OCI-LY7 (cell line): ENCODE measurements at regions of chr20 and their contacts with region 1.

Region 1: DNA sequence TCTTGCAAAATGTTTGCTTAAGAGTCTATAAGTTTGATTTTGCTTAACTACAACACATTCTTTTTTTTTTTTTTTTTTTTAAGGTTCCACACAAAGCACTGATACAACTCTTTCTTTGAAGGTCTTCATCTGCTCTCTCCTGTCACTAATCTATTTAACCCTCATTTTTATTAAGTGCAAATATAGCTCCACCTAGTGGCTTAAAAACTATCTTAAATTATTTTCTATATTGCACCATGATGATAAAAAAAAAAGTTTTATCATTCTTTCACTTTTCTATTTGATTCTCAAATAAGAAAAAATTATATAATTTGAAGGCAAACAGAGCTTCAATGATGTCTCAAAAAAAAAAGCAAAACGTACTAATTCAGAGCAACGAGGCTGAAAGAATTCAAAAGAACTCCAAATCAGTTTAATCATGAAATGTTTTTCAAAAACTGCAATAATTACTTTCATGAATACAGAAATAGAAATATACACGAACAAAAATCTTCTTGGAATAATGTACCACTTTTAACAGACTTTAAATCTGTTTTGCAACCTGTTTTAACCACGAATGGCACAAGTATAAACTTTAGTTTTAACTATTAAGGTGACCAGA is 12.8 kb downstream of the ESF1 start:
- DNase-seq: peak; percentile 56
- H3K4me3 ChIP-seq: no peak overlapping the region
- H3K27ac ChIP-seq: no peak overlapping the region
- H3K4me1 ChIP-seq: no peaks in the 10 kb centered on the region
- CTCF ChIP-seq: peak; percentile 86

Region 2: DNA sequence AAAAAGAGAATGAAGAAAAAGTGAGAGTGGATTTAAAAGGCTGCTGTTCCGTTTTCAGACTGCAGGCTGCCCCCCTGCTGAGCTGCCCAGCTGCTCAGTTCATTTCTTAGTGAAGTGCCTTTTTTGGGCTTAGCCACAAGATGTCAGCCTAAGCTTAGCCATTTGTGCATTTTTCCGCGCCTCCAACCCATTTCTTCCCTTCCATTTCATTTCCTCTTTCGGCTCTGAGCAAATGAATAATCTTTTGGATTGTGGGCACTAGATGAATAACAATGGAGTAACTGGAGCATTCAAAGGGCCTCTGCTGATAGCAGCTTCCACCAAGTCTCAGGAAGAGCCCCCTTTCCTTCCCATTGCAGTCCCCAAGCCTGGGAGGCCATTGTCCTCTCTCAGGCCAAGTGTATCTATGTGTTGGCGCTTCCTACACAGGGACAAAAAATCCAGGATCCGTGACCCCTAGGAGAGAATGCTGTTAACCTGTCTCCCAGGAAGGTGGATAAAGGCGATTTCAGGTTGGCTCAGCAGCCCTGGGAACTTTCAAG is 846.7 kb before region 1 on chr20:
- CTCF ChIA-PET with region 1: no interaction called
- POLR2A ChIA-PET with region 1: no interaction called
- intact Hi-C with region 1: loop called (anchors 5 kb)
- DNase-seq: peak; percentile 57
- H3K4me3 ChIP-seq: no peak overlapping the region
- H3K27ac ChIP-seq: no peak overlapping the region
- H3K4me1 ChIP-seq: no peaks in the 10 kb centered on the region
- CTCF ChIP-seq: peak; percentile 82

Region 3: GRCh38 chr20:13458860-13459451 is 313.0 kb before region 1 on chr20:
- CTCF ChIA-PET with region 1: no interaction called
- POLR2A ChIA-PET with region 1: interaction called, 3 read pairs
- intact Hi-C with region 1: loop called (anchors 5 kb)
- DNase-seq: peak; percentile 26
- H3K4me3 ChIP-seq: no peak overlapping the region
- H3K27ac ChIP-seq: no peak overlapping the region
- H3K4me1 ChIP-seq: no peaks in the 10 kb centered on the region
- CTCF ChIP-seq: peak; percentile 88

Region 4: DNA sequence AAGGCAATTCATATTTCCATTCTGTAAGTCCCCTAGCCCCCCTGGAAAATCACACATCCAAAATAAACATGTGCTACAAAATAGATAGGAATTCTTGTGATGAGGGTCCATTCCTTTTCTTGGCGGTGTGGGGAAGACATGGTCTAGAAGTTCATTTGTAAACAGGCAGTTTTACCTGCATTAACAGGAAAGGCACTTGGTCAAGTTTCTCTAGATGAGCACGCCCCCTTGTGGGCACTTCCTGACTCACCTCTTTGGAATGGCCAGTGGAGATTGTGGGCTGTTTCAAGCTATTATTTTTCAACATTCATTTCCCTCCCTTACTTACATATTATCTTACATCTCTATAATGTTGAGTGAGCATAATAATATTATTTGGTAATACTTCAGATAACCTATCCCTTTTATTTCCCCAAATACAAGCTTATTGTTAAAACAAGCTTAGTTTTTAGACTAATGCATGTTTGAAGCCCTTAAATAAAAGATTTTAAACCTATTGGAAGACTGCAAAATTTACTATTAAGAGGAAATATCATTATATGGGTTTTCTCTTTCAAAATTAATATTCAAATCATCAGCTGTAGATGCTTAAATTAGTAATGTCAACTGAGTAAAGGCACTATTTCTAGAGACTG is 225.3 kb before region 1 on chr20:
- CTCF ChIA-PET with region 1: no interaction called
- POLR2A ChIA-PET with region 1: interaction called, 4 read pairs
- intact Hi-C with region 1: loop called (anchors 5 kb)
- DNase-seq: peak; percentile 72
- H3K4me3 ChIP-seq: no peak overlapping the region
- H3K27ac ChIP-seq: no peak overlapping the region
- H3K4me1 ChIP-seq: no peaks in the 10 kb centered on the region
- CTCF ChIP-seq: peak; percentile 94

Region 5: GRCh38 chr20:13739731-13740649 is 32.0 kb before region 1 on chr20:
- CTCF ChIA-PET with region 1: no interaction called
- POLR2A ChIA-PET with region 1: no interaction called
- intact Hi-C with region 1: no loop called
- DNase-seq: no peak
- H3K4me3 ChIP-seq: no peak overlapping the region
- H3K27ac ChIP-seq: no peak overlapping the region
- H3K4me1 ChIP-seq: no peaks in the 10 kb centered on the region
- CTCF ChIP-seq: no peak

Region 6: GRCh38 chr20:13857304-13857703 is 85.4 kb after region 1 on chr20:
- CTCF ChIA-PET with region 1: no interaction called
- POLR2A ChIA-PET with region 1: no interaction called
- intact Hi-C with region 1: no loop called
- DNase-seq: no peak
- H3K4me3 ChIP-seq: no peak overlapping the region
- H3K27ac ChIP-seq: no peak overlapping the region
- H3K4me1 ChIP-seq: no peaks in the 10 kb centered on the region
- CTCF ChIP-seq: no peak